ENCODE measurements at regions of chr9 and their contacts with region 1.

Region 1: GRCh38 chr9:124208571-124208970 is 49.2 kb upstream of the NEK6 start:
- DNase-seq: no peak
- ATAC-seq: no peak
- H3K4me3 ChIP-seq: no peak overlapping the region
- H3K27ac ChIP-seq: no peak overlapping the region
- H3K4me1 ChIP-seq: peaks cover 4 to 14% of the 10 kb centered on the region in 2 experiments; a peak in 2 of 5 replicates
- H3K27me3 ChIP-seq: peaks cover 0 to 3% of the 10 kb centered on the region in 2 experiments; a peak in 3 of 5 replicates
- CTCF ChIP-seq: no peak
- EP300 ChIP-seq: no peak
- POLR2A ChIP-seq: no peak
- RAD21 ChIP-seq: no peak

Region 2: GRCh38 chr9:124260769-124261553 is 52.4 kb after region 1 on chr9:
- CTCF ChIA-PET with region 1: no interaction called
- POLR2A ChIA-PET with region 1: no interaction called
- in situ Hi-C with region 1: loop called (anchors 5 kb)
- intact Hi-C with region 1: no loop called
- DNase-seq: peak in 1 of 4 experiments; percentile 33
- ATAC-seq: peak; percentile 22; the same call in 2 of the 3 replicates
- H3K4me3 ChIP-seq: no peak overlapping the region
- H3K27ac ChIP-seq: no peak overlapping the region
- H3K4me1 ChIP-seq: peaks cover 20 to 24% of the 10 kb centered on the region in 2 experiments; a peak in 4 of 5 replicates
- H3K27me3 ChIP-seq: peaks cover 0 to 11% of the 10 kb centered on the region in 2 experiments; a peak in 3 of 5 replicates
- CTCF ChIP-seq: no peak
- EP300 ChIP-seq: no peak
- POLR2A ChIP-seq: no peak
- RAD21 ChIP-seq: no peak

Region 3: DNA sequence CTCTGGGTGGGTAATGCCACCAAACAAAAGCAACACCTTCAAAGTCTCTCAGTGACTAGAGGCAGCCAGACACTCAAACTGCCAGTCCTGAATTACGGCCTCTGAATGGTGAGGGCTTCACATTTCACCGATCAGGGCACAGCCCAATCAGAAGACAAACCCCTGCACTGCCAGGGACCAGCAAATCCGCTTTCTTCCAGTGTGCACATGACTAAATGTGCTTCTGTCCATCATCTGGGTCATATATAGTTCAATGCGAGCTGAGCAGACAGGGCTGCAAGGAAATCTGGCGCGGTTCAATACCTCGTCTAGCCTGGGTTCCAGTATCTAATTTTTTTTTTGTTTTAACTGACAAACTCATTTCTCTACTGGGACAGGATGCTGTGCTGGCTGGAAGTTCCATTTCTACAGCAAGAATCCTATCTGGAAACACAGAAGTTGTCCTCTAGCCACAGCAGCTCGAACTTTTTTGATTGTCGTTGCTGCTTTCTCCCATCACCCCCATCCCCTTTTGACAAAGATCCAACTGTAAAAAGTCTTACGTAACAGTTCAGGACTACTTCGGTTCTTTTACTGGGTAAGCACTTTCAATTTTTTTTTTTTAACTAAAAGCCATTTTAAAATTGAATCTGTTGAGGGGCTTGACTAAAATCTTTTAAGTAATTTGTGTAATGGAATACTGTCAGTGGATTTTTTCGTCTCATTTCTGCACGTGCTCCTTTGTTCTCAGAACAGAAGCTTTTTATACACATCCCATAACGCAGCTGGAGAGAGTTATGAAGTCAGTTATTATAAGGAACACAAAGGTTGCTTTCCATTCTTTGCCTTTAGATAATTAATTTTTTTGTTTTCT is 449.8 kb after region 1 on chr9:
- CTCF ChIA-PET with region 1: no interaction called
- POLR2A ChIA-PET with region 1: no interaction called
- in situ Hi-C with region 1: no loop called
- intact Hi-C with region 1: no loop called
- DNase-seq: peak; percentile 23 to 88 (median 55)
- ATAC-seq: peak; percentile 89
- H3K4me3 ChIP-seq: peak overlapping the region; percentile 39
- H3K27ac ChIP-seq: peak overlapping the region; percentile 86
- H3K4me1 ChIP-seq: peaks cover 0 to 34% of the 10 kb centered on the region in 2 experiments; a peak in 4 of 5 replicates
- H3K27me3 ChIP-seq: no peaks in the 10 kb centered on the region
- CTCF ChIP-seq: no peak
- EP300 ChIP-seq: peak; percentile 51; the same call in 1 of the 2 replicates
- POLR2A ChIP-seq: peak; percentile 66; the same call in 1 of the 2 replicates
- RAD21 ChIP-seq: no peak